GM12878 (cell line): ENCODE measurements at regions of chr4 and their contacts with region 1.

Region 1: DNA sequence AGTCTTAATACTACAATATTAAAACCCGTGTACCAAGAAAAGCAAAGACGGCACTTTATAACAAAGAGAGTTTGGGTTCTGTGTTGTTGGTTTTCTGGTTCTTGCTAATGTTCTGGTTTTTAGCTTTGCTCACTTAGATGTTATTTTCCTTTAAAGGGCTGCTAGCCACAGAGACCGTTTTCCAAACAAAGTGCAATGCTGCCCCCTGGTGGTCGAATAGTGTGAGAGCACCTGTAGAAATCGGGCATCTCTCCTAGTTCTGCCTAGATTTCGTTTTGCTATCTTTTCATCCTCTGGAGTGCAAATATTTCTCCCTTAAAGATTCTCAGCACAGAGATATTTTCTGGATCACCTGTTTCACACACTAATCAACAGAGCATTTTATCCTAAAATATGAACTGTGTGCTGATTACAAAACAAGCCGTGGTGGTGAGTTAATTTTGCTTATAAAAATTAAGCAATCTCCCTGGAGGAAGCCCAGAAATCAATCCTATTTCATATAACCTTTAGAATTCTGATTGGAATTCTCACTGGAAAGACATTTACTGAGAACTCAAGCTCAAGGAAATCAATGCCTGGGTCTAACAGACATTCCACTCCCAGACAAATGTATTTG is 334.5 kb upstream of the NOCT start:
- DNase-seq: peak; percentile 11
- ATAC-seq: peak; percentile 88
- H3K4me3 ChIP-seq: no peak overlapping the region
- H3K27ac ChIP-seq: no peak overlapping the region
- H3K4me1 ChIP-seq: no peaks in the 10 kb centered on the region
- H3K27me3 ChIP-seq: peaks cover 0 to 1% of the 10 kb centered on the region in 2 experiments; a peak in 1 of 4 replicates
- CTCF ChIP-seq: peak; percentile 80 to 94 (median 87)
- EP300 ChIP-seq: no peak
- POLR2A ChIP-seq: no peak
- RAD21 ChIP-seq: peak; percentile 96

Region 2: DNA sequence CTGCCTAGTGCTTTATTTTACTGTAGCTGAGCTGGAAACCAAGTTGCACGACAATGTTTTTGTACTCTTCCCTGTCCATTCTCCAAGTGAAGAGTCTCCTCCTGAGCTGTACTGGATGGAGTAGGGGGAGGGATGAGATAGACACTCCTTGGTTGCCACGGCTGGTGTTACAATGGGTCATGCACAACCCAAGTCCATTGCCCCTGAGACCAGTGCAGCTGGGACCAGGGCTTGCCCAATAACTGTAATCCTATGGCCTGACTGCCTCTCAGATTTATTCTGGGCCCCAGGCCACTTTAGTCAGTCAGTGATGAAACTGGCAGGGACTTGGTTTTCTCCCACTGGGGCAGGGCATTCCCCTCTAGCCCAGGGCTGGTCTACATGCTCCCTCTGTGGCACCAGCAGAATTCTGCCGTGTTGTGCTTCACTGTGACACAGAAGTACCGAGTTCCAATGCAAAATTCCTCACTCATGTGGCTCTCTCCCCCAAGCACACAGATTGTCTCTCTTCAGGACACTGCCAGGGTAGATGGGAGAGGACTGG is 945.5 kb before region 1 on chr4:
- CTCF ChIA-PET with region 1: interaction called, 5 read pairs
- POLR2A ChIA-PET with region 1: no interaction called
- RAD21 ChIA-PET with region 1: no interaction called
- SMC1A ChIA-PET with region 1: no interaction called
- in situ Hi-C with region 1: no loop called
- intact Hi-C with region 1: loop called (anchors 1 kb)
- DNase-seq: no peak
- ATAC-seq: peak; percentile 75
- H3K4me3 ChIP-seq: no peak overlapping the region
- H3K27ac ChIP-seq: no peak overlapping the region
- H3K4me1 ChIP-seq: no peaks in the 10 kb centered on the region
- H3K27me3 ChIP-seq: no peaks in the 10 kb centered on the region
- CTCF ChIP-seq: peak in 1 of 3 experiments; percentile 23; a peak in 1 of 6 replicates
- EP300 ChIP-seq: no peak
- POLR2A ChIP-seq: no peak
- RAD21 ChIP-seq: no peak

Region 3: DNA sequence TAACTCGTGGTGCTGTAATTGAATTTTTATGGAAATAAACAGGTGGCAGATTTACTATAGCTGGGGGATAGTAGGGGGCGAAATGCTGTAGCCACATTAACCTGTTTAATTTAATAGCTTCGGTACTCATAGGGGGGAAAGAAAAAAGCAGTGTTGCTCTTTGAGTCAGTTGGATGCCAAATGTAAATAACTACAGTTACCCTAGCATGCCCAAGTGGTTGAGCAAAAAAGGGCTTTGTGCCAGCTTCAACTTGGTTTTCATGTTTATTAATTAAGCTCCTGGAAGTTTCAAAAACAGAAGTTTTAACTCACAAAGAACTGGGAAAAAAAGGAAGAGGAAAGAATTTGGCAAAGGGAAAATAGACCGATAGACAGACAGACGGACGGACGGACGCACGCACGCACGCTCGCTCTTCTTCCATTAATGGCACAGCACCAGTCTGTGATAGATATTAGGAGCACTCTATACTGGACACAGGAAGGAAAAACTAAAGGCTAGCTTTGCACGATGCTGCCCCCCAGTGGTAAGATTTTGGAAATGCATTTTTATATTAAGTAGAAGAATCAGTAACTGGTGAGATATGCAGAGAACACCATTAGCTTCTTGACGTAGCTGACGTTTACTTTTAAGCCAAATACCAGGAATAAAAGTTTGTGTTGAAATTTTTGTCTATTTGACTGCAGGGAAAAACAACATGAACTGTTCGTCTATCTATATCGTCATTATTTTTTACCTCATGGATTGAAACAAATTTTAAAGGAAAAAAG is 590.8 kb before region 1 on chr4:
- CTCF ChIA-PET with region 1: interaction called, 23 read pairs
- POLR2A ChIA-PET with region 1: no interaction called
- RAD21 ChIA-PET with region 1: interaction called, 15 read pairs
- SMC1A ChIA-PET with region 1: interaction called, 17 read pairs
- in situ Hi-C with region 1: no loop called
- intact Hi-C with region 1: loop called (anchors 5 kb)
- DNase-seq: peak; percentile 17
- ATAC-seq: peak; percentile 94
- H3K4me3 ChIP-seq: no peak overlapping the region
- H3K27ac ChIP-seq: no peak overlapping the region
- H3K4me1 ChIP-seq: no peaks in the 10 kb centered on the region
- H3K27me3 ChIP-seq: no peaks in the 10 kb centered on the region; a peak in 1 of 4 replicates
- CTCF ChIP-seq: peak; percentile 68 to 77 (median 71)
- EP300 ChIP-seq: no peak
- POLR2A ChIP-seq: no peak
- RAD21 ChIP-seq: peak; percentile 73

Region 4: GRCh38 chr4:138439143-138439581 is 241.9 kb before region 1 on chr4:
- CTCF ChIA-PET with region 1: no interaction called
- POLR2A ChIA-PET with region 1: no interaction called
- RAD21 ChIA-PET with region 1: no interaction called
- SMC1A ChIA-PET with region 1: no interaction called
- in situ Hi-C with region 1: no loop called
- intact Hi-C with region 1: no loop called
- DNase-seq: no peak
- ATAC-seq: no peak
- H3K4me3 ChIP-seq: no peak overlapping the region
- H3K27ac ChIP-seq: no peak overlapping the region
- H3K4me1 ChIP-seq: no peaks in the 10 kb centered on the region
- H3K27me3 ChIP-seq: no peaks in the 10 kb centered on the region
- CTCF ChIP-seq: no peak
- EP300 ChIP-seq: no peak
- POLR2A ChIP-seq: no peak
- RAD21 ChIP-seq: no peak

Region 5: GRCh38 chr4:138494931-138495330 is 186.2 kb before region 1 on chr4:
- CTCF ChIA-PET with region 1: interaction called, 19 read pairs
- POLR2A ChIA-PET with region 1: no interaction called
- RAD21 ChIA-PET with region 1: no interaction called
- SMC1A ChIA-PET with region 1: interaction called, 9 read pairs
- in situ Hi-C with region 1: no loop called
- intact Hi-C with region 1: no loop called
- DNase-seq: peak; percentile 4
- ATAC-seq: peak; percentile 93
- H3K4me3 ChIP-seq: no peak overlapping the region
- H3K27ac ChIP-seq: no peak overlapping the region
- H3K4me1 ChIP-seq: no peaks in the 10 kb centered on the region
- H3K27me3 ChIP-seq: no peaks in the 10 kb centered on the region
- CTCF ChIP-seq: peak; percentile 17 to 37 (median 34); a peak in 3 of 6 replicates
- EP300 ChIP-seq: no peak
- POLR2A ChIP-seq: no peak
- RAD21 ChIP-seq: peak; percentile 49

Region 6: DNA sequence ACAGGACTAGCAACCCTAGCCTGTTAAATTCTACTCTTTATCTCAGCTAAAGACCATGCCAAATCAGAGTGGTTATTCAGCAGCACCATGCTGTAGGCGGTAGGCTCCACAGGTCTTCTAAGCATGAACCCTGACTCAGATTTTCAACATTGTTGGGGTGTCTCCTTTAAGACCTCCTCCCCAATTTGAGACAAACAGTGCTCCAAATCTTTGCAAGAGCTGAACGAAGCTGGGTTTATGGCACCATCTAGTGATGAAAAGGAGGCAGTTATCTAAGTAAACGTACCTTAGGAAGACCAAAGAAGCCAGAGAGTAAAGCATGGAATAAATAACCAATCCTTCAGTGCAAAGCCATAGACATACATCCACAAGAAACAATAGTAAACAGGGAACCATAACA is 104.4 kb before region 1 on chr4:
- CTCF ChIA-PET with region 1: interaction called, 17 read pairs
- POLR2A ChIA-PET with region 1: no interaction called
- RAD21 ChIA-PET with region 1: interaction called, 25 read pairs
- SMC1A ChIA-PET with region 1: interaction called, 17 read pairs
- in situ Hi-C with region 1: no loop called
- intact Hi-C with region 1: loop called (anchors 1 kb)
- DNase-seq: no peak
- ATAC-seq: peak; percentile 71
- H3K4me3 ChIP-seq: no peak overlapping the region
- H3K27ac ChIP-seq: no peak overlapping the region
- H3K4me1 ChIP-seq: no peaks in the 10 kb centered on the region
- H3K27me3 ChIP-seq: no peaks in the 10 kb centered on the region
- CTCF ChIP-seq: peak in 2 of 3 experiments; percentile 34 to 41; a peak in 4 of 6 replicates
- EP300 ChIP-seq: no peak
- POLR2A ChIP-seq: no peak
- RAD21 ChIP-seq: peak; percentile 60

Region 7: DNA sequence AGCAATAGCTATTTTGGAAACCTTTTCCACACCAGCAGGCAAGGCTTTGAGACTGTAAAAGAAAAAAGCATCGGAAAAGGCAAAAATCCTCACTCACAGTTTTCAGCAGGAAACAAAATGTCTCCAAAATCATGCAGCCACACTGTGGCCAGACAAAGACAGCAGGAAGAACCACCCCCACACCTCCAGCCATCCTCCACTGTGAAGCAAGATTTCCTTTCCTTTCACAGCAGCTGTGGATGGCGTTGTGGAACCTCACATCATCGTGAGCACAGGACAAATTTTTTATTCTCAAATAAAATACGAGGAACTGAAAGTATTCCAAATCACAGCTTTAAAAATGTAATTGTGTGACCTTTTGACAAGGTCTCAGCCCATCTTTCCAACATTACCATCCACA is 17.2 kb before region 1 on chr4:
- CTCF ChIA-PET with region 1: interaction called, 15 read pairs
- POLR2A ChIA-PET with region 1: interaction called, 4 read pairs
- RAD21 ChIA-PET with region 1: interaction called, 8 read pairs
- SMC1A ChIA-PET with region 1: interaction called, 31 read pairs
- in situ Hi-C with region 1: no loop called
- intact Hi-C with region 1: no loop called
- DNase-seq: no peak
- ATAC-seq: no peak
- H3K4me3 ChIP-seq: no peak overlapping the region
- H3K27ac ChIP-seq: no peak overlapping the region
- H3K4me1 ChIP-seq: no peaks in the 10 kb centered on the region
- H3K27me3 ChIP-seq: peaks cover 0 to 2% of the 10 kb centered on the region in 2 experiments; a peak in 1 of 4 replicates
- CTCF ChIP-seq: no peak
- EP300 ChIP-seq: no peak
- POLR2A ChIP-seq: no peak
- RAD21 ChIP-seq: no peak

Region 8: DNA sequence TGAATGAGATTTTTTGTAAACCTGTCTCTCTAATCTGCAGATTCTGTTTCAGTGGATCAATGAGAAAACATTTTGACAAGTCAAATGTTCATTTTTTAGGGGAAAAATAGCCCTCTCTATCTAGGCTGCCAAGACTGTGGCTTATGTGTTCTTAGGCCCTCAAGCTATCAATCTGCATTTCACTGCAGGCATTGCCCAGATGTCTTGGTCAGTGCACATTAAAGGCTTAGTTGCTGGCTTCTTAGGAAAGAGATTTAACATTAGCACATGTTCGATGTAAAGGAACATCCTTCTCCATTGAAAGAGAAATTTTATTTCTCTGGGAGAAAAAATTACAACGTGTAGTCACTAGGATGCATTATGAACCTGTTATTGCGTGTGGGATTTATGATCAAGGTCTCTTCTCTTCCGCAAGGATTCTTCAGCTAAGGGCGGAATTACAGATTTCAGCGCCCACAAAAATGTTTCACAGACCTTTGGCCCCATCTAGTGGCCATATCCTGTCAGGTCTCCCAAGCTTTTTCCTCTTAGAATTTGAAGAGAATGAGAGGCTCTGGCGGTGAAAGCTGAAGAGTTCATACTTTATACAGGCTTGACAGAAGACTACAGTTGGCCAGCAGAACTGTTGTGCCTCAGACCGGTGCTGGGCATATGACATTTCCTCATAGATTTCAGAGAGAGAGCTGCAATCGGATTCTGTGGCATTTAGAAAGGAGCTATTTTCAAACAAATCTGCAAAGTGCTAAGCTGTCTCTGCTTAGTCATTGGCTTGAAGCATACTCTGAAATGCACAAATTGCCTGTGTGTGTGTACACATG is 189.8 kb after region 1 on chr4:
- CTCF ChIA-PET with region 1: interaction called, 29 read pairs
- POLR2A ChIA-PET with region 1: no interaction called
- RAD21 ChIA-PET with region 1: interaction called, 8 read pairs
- SMC1A ChIA-PET with region 1: interaction called, 18 read pairs
- in situ Hi-C with region 1: no loop called
- intact Hi-C with region 1: loop called (anchors 5 kb)
- DNase-seq: peak; percentile 7
- ATAC-seq: peak; percentile 83
- H3K4me3 ChIP-seq: no peak overlapping the region
- H3K27ac ChIP-seq: no peak overlapping the region
- H3K4me1 ChIP-seq: no peaks in the 10 kb centered on the region
- H3K27me3 ChIP-seq: no peaks in the 10 kb centered on the region
- CTCF ChIP-seq: peak; percentile 75 to 84 (median 82)
- EP300 ChIP-seq: no peak
- POLR2A ChIP-seq: no peak
- RAD21 ChIP-seq: peak; percentile 85